T-cell (primary cell): ENCODE measurements at regions of chr15 and their contacts with region 1.

Region 1: GRCh38 chr15:60634815-60635214 is 155.9 kb upstream of the ICE2 start:
- DNase-seq: peak in 1 of 35 experiments; percentile 14
- ATAC-seq: no peak
- H3K4me3 ChIP-seq: no peak overlapping the region
- H3K4me3 Mint-ChIP-seq: no peak overlapping the region
- H3K27ac ChIP-seq: no peak overlapping the region
- H3K27ac Mint-ChIP-seq: no peak overlapping the region
- H3K4me1 ChIP-seq: no peaks in the 10 kb centered on the region
- H3K4me1 Mint-ChIP-seq: peaks cover 11 to 17% (median 12%) of the 10 kb centered on the region in 3 donors
- H3K27me3 ChIP-seq: no peaks in the 10 kb centered on the region
- H3K27me3 Mint-ChIP-seq: no peaks in the 10 kb centered on the region

Region 2: GRCh38 chr15:60426870-60427508 is 207.8 kb before region 1 on chr15:
- CTCF ChIA-PET with region 1: no interaction called
- POLR2A ChIA-PET with region 1: no interaction called
- DNase-seq: no peak
- ATAC-seq: no peak
- H3K4me3 ChIP-seq: no peak overlapping the region
- H3K4me3 Mint-ChIP-seq: no peak overlapping the region
- H3K27ac ChIP-seq: no peak overlapping the region
- H3K27ac Mint-ChIP-seq: no peak overlapping the region
- H3K4me1 ChIP-seq: no peaks in the 10 kb centered on the region
- H3K4me1 Mint-ChIP-seq: peaks cover 0 to 3% (median 0%) of the 10 kb centered on the region in 3 donors
- H3K27me3 ChIP-seq: no peaks in the 10 kb centered on the region
- H3K27me3 Mint-ChIP-seq: no peaks in the 10 kb centered on the region

Region 3: GRCh38 chr15:60620708-60621107 is 14.1 kb before region 1 on chr15:
- CTCF ChIA-PET with region 1: no interaction called
- POLR2A ChIA-PET with region 1: interaction called in 1 of 2 experiments, 12 read pairs
- DNase-seq: no peak
- ATAC-seq: no peak
- H3K4me3 ChIP-seq: no peak overlapping the region
- H3K4me3 Mint-ChIP-seq: no peak overlapping the region
- H3K27ac ChIP-seq: no peak overlapping the region
- H3K27ac Mint-ChIP-seq: no peak overlapping the region
- H3K4me1 ChIP-seq: no peaks in the 10 kb centered on the region
- H3K4me1 Mint-ChIP-seq: no peaks in the 10 kb centered on the region
- H3K27me3 ChIP-seq: no peaks in the 10 kb centered on the region
- H3K27me3 Mint-ChIP-seq: no peaks in the 10 kb centered on the region